Right ventricle myocardium superior (tissue), 1 donor: ENCODE measurements at regions of chr10 and their contacts with region 1.

Region 1: DNA sequence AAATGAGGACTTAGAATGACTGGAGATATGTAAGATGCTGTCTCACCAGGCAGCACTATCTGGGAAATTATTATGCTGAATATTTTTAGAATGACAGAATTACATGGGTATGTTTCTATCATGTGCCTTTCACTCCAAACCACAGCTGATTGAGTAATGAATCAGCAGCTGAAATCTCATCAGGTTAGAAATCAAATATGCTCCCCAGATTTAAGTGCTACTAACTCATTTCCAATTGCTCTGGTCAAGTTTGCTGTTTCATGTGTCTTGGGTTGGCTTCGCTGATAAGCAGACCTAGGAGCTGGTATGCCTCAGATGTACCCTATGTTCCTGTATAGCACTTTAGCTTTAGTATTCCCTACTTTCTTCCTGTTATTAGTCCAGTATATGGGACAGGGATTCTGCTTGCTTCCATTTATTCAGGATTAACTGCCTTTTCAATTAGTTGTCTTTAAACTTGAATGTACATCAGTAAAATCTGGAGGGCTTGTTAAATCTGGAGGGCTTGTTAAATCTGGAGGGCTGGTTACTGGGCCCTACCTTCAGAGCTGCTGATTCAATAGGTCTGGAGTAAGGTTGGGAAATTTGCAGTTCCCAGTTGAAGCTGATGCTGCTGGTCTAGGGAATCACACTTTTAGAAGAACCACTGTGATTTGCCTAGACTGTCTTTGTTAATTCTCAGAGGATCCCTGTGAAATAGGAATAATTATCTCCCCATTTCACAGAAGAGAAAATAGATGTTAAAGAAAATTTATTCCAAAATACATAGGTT is 172.9 kb downstream of the DKK1 start:
- DNase-seq: no peak
- ATAC-seq: no peak

Region 2: GRCh38 chr10:52308251-52309031 is 178.6 kb before region 1 on chr10:
- intact Hi-C with region 1: loop called (anchors 2 kb)
- DNase-seq: peak; percentile 57
- ATAC-seq: peak; percentile 95

Region 3: GRCh38 chr10:52609071-52609470 is 122.0 kb after region 1 on chr10:
- intact Hi-C with region 1: no loop called
- DNase-seq: no peak
- ATAC-seq: no peak